Common myeloid progenitor, CD34-positive (primary cell): ENCODE measurements at regions of chr11 and their contacts with region 1.

Region 1: DNA sequence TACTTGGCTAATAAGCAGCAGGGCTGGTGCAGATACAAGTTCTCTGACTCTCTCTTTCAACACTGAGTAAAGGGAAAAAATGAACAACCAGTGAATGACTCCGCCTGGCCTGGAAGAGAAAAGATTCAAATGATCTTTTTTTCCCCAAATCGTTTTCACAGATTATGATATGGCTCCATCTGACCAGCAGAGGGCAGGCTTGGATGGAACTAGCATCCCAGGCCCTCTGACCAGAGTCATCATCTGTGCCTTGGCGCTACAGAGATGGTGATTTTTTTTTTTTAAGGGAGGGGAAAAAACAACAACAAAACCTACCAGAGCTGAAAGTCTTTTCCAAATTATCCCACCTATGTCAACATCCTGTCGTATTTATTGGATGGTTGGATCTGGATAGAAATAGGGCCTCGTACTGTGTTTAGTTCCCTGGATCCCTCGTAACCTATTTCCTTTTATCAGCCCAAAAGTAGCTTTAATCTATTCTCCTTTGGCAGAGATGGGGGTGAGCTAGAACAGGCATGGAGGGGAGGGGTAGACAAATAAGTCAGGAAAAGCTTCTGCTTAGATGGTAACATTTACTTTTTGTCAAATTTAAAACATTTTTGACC is 69.7 kb downstream of the PRSS23 start:
- DNase-seq: peak; percentile 35 to 55 (median 47)
- H3K4me3 ChIP-seq: no peak overlapping the region
- H3K27ac ChIP-seq: no peak overlapping the region
- H3K4me1 ChIP-seq: no peaks in the 10 kb centered on the region
- H3K27me3 ChIP-seq: no peaks in the 10 kb centered on the region

Region 2: GRCh38 chr11:86773513-86774252 is 96.4 kb before region 1 on chr11:
- CTCF ChIA-PET with region 1: no interaction called
- POLR2A ChIA-PET with region 1: no interaction called
- DNase-seq: no peak
- H3K4me3 ChIP-seq: no peak overlapping the region
- H3K27ac ChIP-seq: no peak overlapping the region
- H3K4me1 ChIP-seq: no peaks in the 10 kb centered on the region
- H3K27me3 ChIP-seq: no peaks in the 10 kb centered on the region

Region 3: GRCh38 chr11:86893235-86893634 is 23.2 kb after region 1 on chr11:
- CTCF ChIA-PET with region 1: interaction called, 10 read pairs
- POLR2A ChIA-PET with region 1: no interaction called
- DNase-seq: no peak
- H3K4me3 ChIP-seq: no peak overlapping the region
- H3K27ac ChIP-seq: no peak overlapping the region
- H3K4me1 ChIP-seq: no peaks in the 10 kb centered on the region
- H3K27me3 ChIP-seq: no peaks in the 10 kb centered on the region

Region 4: GRCh38 chr11:86919557-86920210 is 49.6 kb after region 1 on chr11:
- CTCF ChIA-PET with region 1: interaction called, 45 read pairs
- POLR2A ChIA-PET with region 1: no interaction called
- DNase-seq: peak; percentile 48 to 69 (median 66)
- H3K4me3 ChIP-seq: no peak overlapping the region
- H3K27ac ChIP-seq: no peak overlapping the region
- H3K4me1 ChIP-seq: peaks cover 0 to 4% (median 2%) of the 10 kb centered on the region in 4 experiments
- H3K27me3 ChIP-seq: no peaks in the 10 kb centered on the region